ENCODE measurements at regions of chr11 and their contacts with region 1.

Region 1: DNA sequence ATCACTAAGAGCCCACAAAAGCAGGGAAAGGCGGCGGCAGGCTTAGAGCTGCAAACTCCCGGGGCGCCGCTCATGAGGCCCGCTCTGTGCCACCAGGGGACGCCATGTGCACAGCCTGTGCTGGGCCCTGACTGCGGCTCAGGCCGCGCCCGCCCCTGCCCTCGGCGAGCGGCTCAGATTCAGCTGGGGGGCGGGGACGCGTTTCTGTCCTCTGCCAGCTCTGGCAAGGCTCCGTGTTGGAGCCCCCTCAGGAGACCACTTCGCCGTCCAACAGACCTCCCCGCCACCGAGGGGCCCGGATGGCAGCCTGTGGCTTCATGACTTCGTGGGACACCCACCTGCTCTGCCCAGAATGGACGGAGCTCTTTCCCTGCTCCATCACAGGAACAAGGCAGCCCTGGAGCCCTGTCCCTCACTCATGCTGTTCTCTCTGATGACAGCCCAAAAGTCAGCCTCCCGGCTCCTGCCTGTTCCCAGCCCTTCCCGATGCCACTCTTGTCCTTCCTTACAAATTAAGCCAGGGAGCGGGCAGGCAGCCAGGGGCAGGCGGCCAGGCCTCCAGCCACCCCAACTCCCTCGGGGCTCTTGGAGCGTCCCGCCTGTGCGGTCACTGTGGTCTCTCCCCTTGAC is 69.1 kb downstream of the NAT10 start:
- DNase-seq: peak; percentile 46 to 90
- H3K4me3 ChIP-seq: peak overlapping the region; percentile 13
- H3K4me1 ChIP-seq: peaks cover 11% of the 10 kb centered on the region
- H3K27me3 ChIP-seq: no peaks in the 10 kb centered on the region

Region 2: DNA sequence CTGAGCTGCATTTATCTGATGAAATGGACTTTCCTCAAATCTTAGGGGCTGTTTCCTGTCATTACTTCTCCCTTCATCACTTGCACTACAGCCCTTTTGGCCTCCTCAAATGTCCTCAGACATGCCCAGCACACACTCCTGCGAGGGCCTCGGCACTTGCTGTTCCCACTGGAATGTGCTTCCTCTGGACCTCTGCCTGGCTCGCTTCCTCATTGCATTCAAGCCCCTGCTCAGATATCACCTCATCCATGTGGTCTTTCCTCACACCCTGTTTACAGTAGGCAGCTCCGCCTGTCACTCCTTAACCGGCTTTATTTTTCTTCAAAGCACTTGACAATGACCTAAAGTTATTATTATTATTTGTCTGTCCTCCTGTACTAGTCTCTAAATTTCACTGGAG is 60.1 kb before region 1 on chr11:
- in situ Hi-C with region 1: no loop called
- DNase-seq: no peak
- H3K4me3 ChIP-seq: no peak overlapping the region
- H3K4me1 ChIP-seq: no peaks in the 10 kb centered on the region
- H3K27me3 ChIP-seq: no peaks in the 10 kb centered on the region

Region 3: GRCh38 chr11:34357701-34358257 is 183.3 kb after region 1 on chr11 and contains the start of gene ABTB2:
- in situ Hi-C with region 1: loop called (anchors 5 kb)
- DNase-seq: peak; percentile 96 to 99
- H3K4me3 ChIP-seq: peak within 1 kb of the TSS; percentile 54
- H3K4me1 ChIP-seq: peaks cover 6% of the 10 kb centered on the region
- H3K27me3 ChIP-seq: peaks cover 5% of the 10 kb centered on the region; the same call in 1 of the 2 replicates

Measured in HAP-1 (cell line).